ENCODE measurements at regions of chr13 and their contacts with region 1.

Region 1: GRCh38 chr13:97975848-97976609 is 22.6 kb downstream of the IPO5 start:
- DNase-seq: peak; percentile 53 to 94 (median 88)
- ATAC-seq: peak; percentile 97
- H3K4me3 ChIP-seq: peak overlapping the region; percentile 69
- H3K4me3 Mint-ChIP-seq: peak overlapping the region; percentile 88 to 100 (median 96)
- H3K27ac ChIP-seq: peak overlapping the region; percentile 88
- H3K27ac Mint-ChIP-seq: peak overlapping the region; percentile 90 to 98 (median 96)
- H3K4me1 ChIP-seq: peaks cover 12 to 15% of the 10 kb centered on the region in 2 donors
- H3K4me1 Mint-ChIP-seq: peaks cover 17 to 44% (median 38%) of the 10 kb centered on the region in 7 donors
- H3K27me3 ChIP-seq: no peaks in the 10 kb centered on the region
- H3K27me3 Mint-ChIP-seq: peaks cover 0 to 5% (median 0%) of the 10 kb centered on the region in 5 donors

Region 2: GRCh38 chr13:97432917-97433726 is 542.9 kb before region 1 on chr13:
- CTCF ChIA-PET with region 1: no interaction called
- POLR2A ChIA-PET with region 1: interaction called, 12 read pairs
- intact Hi-C with region 1: loop called (anchors 1 kb)
- DNase-seq: peak; percentile 97 to 99 (median 99)
- ATAC-seq: peak; percentile 85
- H3K4me3 ChIP-seq: peak overlapping the region; percentile 93
- H3K4me3 Mint-ChIP-seq: peak overlapping the region; percentile 90 to 99 (median 96)
- H3K27ac ChIP-seq: peak overlapping the region; percentile 100
- H3K27ac Mint-ChIP-seq: peak overlapping the region; percentile 98 to 100 (median 100)
- H3K4me1 ChIP-seq: peaks cover 0 to 8% of the 10 kb centered on the region in 2 donors
- H3K4me1 Mint-ChIP-seq: peaks cover 13 to 36% (median 30%) of the 10 kb centered on the region in 7 donors
- H3K27me3 ChIP-seq: no peaks in the 10 kb centered on the region
- H3K27me3 Mint-ChIP-seq: peaks cover 0 to 11% (median 7%) of the 10 kb centered on the region in 5 donors

Region 3: GRCh38 chr13:97986835-97987234 is 10.8 kb after region 1 on chr13:
- CTCF ChIA-PET with region 1: no interaction called
- POLR2A ChIA-PET with region 1: interaction called, 3 read pairs
- intact Hi-C with region 1: loop called in 1 of 2 experiments (anchors 1 kb)
- DNase-seq: no peak
- ATAC-seq: peak; percentile 57
- H3K4me3 ChIP-seq: no peak overlapping the region
- H3K4me3 Mint-ChIP-seq: no peak overlapping the region
- H3K27ac ChIP-seq: no peak overlapping the region
- H3K27ac Mint-ChIP-seq: no peak overlapping the region
- H3K4me1 ChIP-seq: no peaks in the 10 kb centered on the region
- H3K4me1 Mint-ChIP-seq: peaks cover 0 to 12% (median 8%) of the 10 kb centered on the region in 7 donors
- H3K27me3 ChIP-seq: no peaks in the 10 kb centered on the region
- H3K27me3 Mint-ChIP-seq: no peaks in the 10 kb centered on the region

Region 4: GRCh38 chr13:98142380-98143156 is 166.5 kb after region 1 on chr13 and contains the start of gene FARP1:
- CTCF ChIA-PET with region 1: no interaction called
- POLR2A ChIA-PET with region 1: no interaction called
- intact Hi-C with region 1: loop called in 1 of 2 experiments (anchors 5 kb)
- DNase-seq: peak in 6 of 9 donors; percentile 1 to 61 (median 6)
- ATAC-seq: peak; percentile 48
- H3K4me3 ChIP-seq: no peak within 1 kb of the TSS
- H3K4me3 Mint-ChIP-seq: peak within 1 kb of the TSS; percentile 42 to 82 (median 70)
- H3K27ac ChIP-seq: no peak within 1 kb of the TSS
- H3K27ac Mint-ChIP-seq: no peak within 1 kb of the TSS
- H3K4me1 ChIP-seq: no peaks in the 10 kb centered on the region
- H3K4me1 Mint-ChIP-seq: peaks cover 0 to 19% (median 13%) of the 10 kb centered on the region in 7 donors
- H3K27me3 ChIP-seq: peaks cover 0 to 6% of the 10 kb centered on the region in 2 donors
- H3K27me3 Mint-ChIP-seq: peaks cover 58 to 72% (median 64%) of the 10 kb centered on the region in 5 donors
- total RNA-seq, gene FARP1: 0.19 to 1.1 (median 0.61) TPM

Region 5: DNA sequence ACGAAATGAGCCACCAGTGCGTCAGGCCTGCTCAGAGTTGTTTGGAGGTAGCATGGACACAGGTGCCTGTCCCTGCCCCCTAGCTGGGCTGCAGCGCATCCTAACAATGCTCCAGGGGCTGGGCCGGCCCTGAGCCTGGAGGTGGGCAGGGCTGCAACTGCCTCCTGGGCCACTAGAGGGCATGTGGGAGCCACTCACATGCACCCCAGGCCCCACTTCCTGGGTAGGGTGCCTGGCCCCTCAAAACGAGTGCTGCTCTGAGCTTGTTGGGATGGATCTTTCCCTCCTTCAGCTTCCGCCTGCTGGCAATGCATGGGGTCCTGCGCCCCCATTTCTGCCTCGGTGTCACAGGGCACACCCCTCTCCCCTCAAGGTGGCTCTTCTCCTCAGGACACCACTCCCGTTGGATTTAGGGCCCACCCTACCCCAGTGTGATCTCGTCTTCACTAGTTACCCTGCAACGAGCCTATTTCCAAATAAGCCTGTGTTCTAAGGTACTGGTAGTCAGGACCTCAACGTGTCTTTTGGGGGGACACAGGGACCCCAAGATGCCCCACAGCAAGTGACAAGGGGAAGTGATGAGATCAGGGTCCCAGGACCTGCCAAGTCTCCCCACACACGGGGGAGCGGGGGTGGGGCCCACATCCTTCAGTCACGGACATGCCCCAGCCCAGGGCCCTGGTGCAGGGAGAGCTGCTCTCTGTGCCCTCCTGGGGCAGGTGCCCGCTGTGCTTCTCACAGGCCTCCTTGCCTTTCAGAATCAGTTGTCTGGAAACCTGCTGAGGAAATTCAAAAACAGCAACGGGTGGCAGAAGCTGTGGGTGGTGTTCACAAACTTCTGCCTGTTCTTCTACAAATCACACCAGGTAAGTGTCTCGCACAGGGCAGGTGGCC is 469.6 kb after region 1 on chr13:
- CTCF ChIA-PET with region 1: no interaction called
- POLR2A ChIA-PET with region 1: no interaction called
- intact Hi-C with region 1: loop called in 1 of 2 experiments (anchors 10 kb)
- DNase-seq: peak; percentile 59 to 82 (median 73)
- ATAC-seq: peak; percentile 95
- H3K4me3 ChIP-seq: no peak overlapping the region
- H3K4me3 Mint-ChIP-seq: peak overlapping the region in 9 of 10 donors; percentile 8 to 76 (median 68)
- H3K27ac ChIP-seq: peak overlapping the region; percentile 58
- H3K27ac Mint-ChIP-seq: peak overlapping the region; percentile 46 to 92 (median 88)
- H3K4me1 ChIP-seq: peaks cover 10 to 15% of the 10 kb centered on the region in 2 donors
- H3K4me1 Mint-ChIP-seq: peaks cover 0 to 23% (median 14%) of the 10 kb centered on the region in 7 donors
- H3K27me3 ChIP-seq: no peaks in the 10 kb centered on the region
- H3K27me3 Mint-ChIP-seq: no peaks in the 10 kb centered on the region

Region 6: GRCh38 chr13:98565726-98566565 is 589.9 kb after region 1 on chr13:
- CTCF ChIA-PET with region 1: interaction called, 3 read pairs
- POLR2A ChIA-PET with region 1: no interaction called
- intact Hi-C with region 1: loop called (anchors 2 to 5 kb)
- DNase-seq: no peak
- ATAC-seq: no peak
- H3K4me3 ChIP-seq: no peak overlapping the region
- H3K4me3 Mint-ChIP-seq: peak overlapping the region; percentile 77 to 99 (median 84)
- H3K27ac ChIP-seq: peak overlapping the region; percentile 69
- H3K27ac Mint-ChIP-seq: peak overlapping the region; percentile 84 to 97 (median 96)
- H3K4me1 ChIP-seq: peaks cover 50 to 87% of the 10 kb centered on the region in 2 donors
- H3K4me1 Mint-ChIP-seq: peaks cover 67 to 99% (median 93%) of the 10 kb centered on the region in 7 donors
- H3K27me3 ChIP-seq: no peaks in the 10 kb centered on the region
- H3K27me3 Mint-ChIP-seq: no peaks in the 10 kb centered on the region

Region 7: DNA sequence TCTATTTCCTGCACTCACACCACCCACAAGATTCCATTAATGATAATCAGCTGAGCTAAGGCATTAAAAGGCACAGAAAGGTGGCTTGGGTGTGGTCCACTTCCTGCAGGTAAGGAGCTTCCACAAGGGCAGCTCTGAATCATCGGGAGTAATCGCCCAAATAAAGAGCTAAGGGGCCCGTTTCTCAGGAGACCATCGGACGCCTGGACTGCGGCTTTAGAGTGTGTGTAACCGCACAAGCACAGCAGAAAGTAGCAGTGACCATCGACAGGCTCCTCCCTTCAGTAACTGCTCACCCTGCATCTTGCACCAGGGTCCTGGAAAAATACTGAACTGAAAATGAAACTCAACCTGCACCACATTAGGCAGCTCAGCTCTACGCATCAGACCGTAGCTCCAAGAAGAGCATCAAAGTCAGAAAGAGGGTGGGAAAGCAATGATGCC is 594.9 kb after region 1 on chr13:
- CTCF ChIA-PET with region 1: interaction called, 3 read pairs
- POLR2A ChIA-PET with region 1: no interaction called
- intact Hi-C with region 1: loop called (anchors 2 to 5 kb)
- DNase-seq: peak in 6 of 9 donors; percentile 51 to 72 (median 60)
- ATAC-seq: peak; percentile 70
- H3K4me3 ChIP-seq: peak overlapping the region; percentile 63
- H3K4me3 Mint-ChIP-seq: peak overlapping the region; percentile 84 to 99 (median 90)
- H3K27ac ChIP-seq: peak overlapping the region; percentile 85
- H3K27ac Mint-ChIP-seq: peak overlapping the region; percentile 84 to 98 (median 96)
- H3K4me1 ChIP-seq: peaks cover 76 to 83% of the 10 kb centered on the region in 2 donors
- H3K4me1 Mint-ChIP-seq: peaks cover 82 to 97% (median 96%) of the 10 kb centered on the region in 7 donors
- H3K27me3 ChIP-seq: no peaks in the 10 kb centered on the region
- H3K27me3 Mint-ChIP-seq: no peaks in the 10 kb centered on the region

Measured in naive thymus-derived CD4-positive, alpha-beta T cell (primary cell).